ENCODE measurements at regions of chr9 and their contacts with region 1.

Region 1: DNA sequence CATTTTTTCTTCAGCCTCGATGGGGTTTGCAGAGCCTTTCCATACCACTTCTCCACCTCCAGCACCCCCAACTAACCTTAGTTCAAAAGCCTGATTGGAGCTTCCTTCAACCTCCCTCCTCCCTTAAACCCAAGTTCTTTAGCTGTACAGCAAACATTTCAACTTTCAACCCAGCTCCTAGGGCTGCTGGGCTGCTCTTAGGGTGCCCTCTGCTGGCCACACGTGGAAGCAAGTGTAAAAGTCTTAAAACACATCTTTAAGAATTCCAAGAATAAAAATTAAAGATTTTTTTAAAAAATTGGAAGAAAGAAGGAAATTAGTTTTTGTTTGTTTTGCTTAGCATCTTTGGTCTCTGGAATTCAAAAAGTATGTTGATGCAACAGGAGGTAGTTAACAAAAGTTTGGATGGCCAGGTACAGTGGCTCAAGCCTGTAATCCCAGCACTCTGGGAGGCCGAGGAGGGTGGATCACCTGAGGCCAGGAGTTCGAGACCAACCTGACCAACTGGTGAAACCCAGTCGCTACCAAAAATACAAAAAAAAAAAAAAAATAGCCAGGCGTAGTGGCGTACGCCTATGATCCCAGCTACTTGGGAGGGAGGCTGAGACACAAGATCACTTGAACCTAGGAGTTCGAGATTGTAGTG is 15.5 kb upstream of the HSD17B3 start:
- DNase-seq: peak in 1 of 2 donors; percentile 64
- ATAC-seq: peak in 3 of 4 donors; percentile 47 to 62 (median 61)
- H3K4me3 ChIP-seq: no peak overlapping the region
- H3K27ac ChIP-seq: no peak overlapping the region
- H3K4me1 ChIP-seq: no peaks in the 10 kb centered on the region
- H3K27me3 ChIP-seq: no peaks in the 10 kb centered on the region
- CTCF ChIP-seq: peak; percentile 70

Region 2: GRCh38 chr9:96186591-96187011 is 130.9 kb before region 1 on chr9:
- intact Hi-C with region 1: no loop called
- DNase-seq: no peak
- ATAC-seq: no peak
- H3K4me3 ChIP-seq: no peak overlapping the region
- H3K27ac ChIP-seq: no peak overlapping the region
- H3K4me1 ChIP-seq: no peaks in the 10 kb centered on the region
- H3K27me3 ChIP-seq: peaks cover 0 to 14% (median 8%) of the 10 kb centered on the region in 3 donors
- CTCF ChIP-seq: no peak

Region 3: GRCh38 chr9:96232539-96233241 is 84.8 kb before region 1 on chr9:
- intact Hi-C with region 1: loop called in 1 of 2 experiments (anchors 5 kb)
- DNase-seq: peak; percentile 50 to 76
- ATAC-seq: peak in 3 of 4 donors; percentile 48 to 76 (median 56)
- H3K4me3 ChIP-seq: no peak overlapping the region
- H3K27ac ChIP-seq: no peak overlapping the region
- H3K4me1 ChIP-seq: no peaks in the 10 kb centered on the region
- H3K27me3 ChIP-seq: no peaks in the 10 kb centered on the region
- CTCF ChIP-seq: peak; percentile 61